ENCODE measurements at regions of chr6 and their contacts with region 1.

Region 1: GRCh38 chr6:160930547-160931377 is 60.8 kb upstream of the MAP3K4 start:
- DNase-seq: peak; percentile 38
- H3K4me3 ChIP-seq: peak overlapping the region; percentile 63
- CTCF ChIP-seq: peak; percentile 93

Region 2: GRCh38 chr6:160919723-160920440 is 10.9 kb before region 1 on chr6:
- CTCF ChIA-PET with region 1: interaction called, 34 read pairs
- POLR2A ChIA-PET with region 1: no interaction called
- DNase-seq: peak; percentile 80
- H3K4me3 ChIP-seq: no peak overlapping the region
- CTCF ChIP-seq: no peak

Region 3: DNA sequence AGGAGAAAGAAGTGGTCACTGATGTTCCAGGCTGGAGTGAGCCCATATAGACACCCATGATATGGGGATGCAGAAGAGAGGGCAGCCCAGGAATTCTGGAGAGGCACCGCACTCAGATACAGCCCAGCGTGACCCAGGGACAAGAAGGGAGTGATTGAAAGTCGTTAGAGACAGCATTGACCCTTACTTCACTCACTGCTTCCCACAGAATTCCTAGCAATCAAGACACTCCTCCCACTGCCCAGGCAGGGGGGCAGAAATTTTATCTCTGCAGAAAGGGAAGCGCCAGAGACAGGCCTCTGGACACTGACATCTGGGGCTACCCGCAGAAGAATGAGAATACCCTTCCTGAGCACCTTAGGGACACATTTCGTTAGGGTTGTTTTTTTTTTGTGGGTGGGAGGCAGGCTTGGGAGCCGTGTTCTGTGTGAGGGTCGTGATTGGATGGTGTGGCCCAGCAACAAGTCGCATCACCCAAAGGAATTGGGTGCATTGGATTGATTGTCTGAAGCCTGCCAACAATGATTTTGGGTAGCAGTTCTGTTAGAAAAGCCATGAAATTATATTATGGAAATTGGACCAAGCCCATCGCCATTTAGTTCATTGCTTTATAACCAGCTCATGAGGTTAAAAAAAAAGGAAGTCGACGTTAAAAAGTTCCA is 14.9 kb after region 1 on chr6:
- CTCF ChIA-PET with region 1: interaction called, 20 read pairs
- POLR2A ChIA-PET with region 1: no interaction called
- DNase-seq: no peak
- H3K4me3 ChIP-seq: no peak overlapping the region
- CTCF ChIP-seq: no peak

Region 4: GRCh38 chr6:160992061-160992979 is 61.6 kb after region 1 on chr6:
- CTCF ChIA-PET with region 1: interaction called, 86 read pairs
- POLR2A ChIA-PET with region 1: no interaction called
- DNase-seq: no peak
- H3K4me3 ChIP-seq: peak overlapping the region; percentile 82
- CTCF ChIP-seq: peak; percentile 72

Region 5: DNA sequence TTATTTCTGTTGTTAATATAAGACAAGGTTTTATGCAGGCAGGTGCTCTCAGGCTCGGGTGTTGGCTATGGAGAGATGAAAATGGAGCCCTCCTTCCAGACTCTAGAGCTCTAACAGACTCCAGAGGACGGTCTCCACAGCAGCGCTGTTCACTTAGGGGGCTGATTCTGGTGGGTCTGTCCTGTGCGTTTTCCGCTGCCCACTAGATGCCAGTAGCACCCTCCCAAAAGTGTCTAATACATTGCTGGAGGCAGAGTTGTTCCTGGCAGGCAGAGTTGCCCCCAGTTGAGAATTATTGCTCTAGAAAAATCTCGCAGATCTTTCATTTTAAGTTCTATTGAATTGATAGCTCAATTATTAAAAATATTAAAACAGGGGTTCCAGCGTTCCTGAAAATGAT is 170.8 kb after region 1 on chr6:
- CTCF ChIA-PET with region 1: interaction called, 12 read pairs
- POLR2A ChIA-PET with region 1: no interaction called
- DNase-seq: no peak
- H3K4me3 ChIP-seq: no peak overlapping the region
- CTCF ChIP-seq: peak; percentile 37